Lower leg skin (tissue), 4 donors: ENCODE measurements at regions of chr11 and their contacts with region 1.

Region 1: DNA sequence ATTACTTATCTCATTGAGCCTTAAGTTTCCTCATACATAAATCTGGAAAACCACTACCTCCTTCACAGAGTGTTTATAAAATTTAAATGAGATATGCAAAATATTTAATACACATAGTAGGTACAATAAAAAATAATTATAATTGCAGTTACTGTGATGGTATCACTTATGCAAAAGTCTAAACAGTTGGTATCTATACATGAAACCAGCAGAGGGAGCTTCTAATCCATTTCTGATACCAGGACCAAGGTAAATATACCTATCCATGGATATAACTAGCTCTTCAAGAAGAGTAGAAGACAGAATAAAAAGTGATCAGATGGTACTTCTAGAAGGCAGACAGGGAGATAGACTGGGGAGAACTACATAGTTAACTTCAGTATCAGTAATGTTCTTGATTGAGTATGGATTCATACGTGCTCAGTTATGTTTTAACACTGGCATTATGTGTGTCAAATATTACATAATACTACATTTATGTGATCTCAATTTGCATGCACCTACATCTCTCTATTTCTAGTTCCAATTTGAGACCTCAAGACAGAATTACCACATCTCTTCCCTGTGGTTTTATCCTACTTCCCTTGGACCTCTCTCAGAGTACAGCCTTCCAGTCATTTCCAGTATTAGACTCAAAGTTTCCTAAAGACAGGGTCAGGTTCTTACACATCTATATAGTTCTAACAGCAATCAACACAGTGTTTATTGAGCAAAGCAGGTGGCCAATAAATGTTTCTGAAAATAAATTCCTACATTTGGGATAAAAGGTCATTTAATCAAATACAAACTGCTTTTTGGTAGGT is 13.7 kb upstream of the TSG101 start:
- DNase-seq: no peak
- H3K4me3 ChIP-seq: no peak overlapping the region
- CTCF ChIP-seq: no peak
- POLR2A ChIP-seq: no peak

Region 2: DNA sequence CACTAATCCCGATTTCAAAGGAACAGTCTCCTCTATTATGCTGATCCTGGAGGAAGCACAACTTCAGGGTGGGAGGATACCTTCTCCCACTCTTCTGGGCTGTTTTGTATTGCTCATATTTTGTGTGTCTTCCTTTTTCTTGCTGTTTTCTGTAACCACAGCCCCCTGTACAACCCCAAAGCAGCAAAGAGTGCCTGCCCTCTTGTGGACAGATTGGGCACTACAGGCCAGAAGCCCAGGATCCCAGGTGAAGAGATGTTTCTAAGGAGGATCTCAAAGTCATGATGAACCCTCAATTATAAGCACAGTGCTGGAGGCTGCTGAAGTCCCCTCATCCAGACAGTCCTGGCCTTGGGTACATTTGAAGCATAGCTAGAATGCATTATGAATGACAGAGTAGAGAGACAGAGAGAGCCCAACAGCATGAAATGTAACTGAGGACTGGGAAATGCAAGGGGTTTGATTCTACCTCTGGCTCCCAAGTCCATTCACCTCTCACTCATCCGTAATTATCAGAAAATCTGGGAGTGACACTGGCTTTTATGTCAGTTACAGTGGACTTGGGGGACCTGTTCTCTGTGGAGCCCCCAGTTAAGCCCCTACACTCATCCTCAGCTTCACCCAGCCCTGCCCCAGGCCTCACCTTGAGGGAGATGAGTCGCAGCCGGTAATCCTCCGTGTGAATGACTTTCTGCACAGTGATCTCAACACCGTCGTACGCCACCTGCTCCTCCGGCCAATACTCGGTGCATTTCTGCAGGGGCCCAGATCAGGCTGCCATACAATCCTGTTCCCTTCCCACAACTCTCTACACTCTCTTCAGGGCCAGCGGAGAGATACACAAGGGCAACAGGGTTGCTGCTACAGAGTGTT is 191.8 kb after region 1 on chr11:
- intact Hi-C with region 1: loop called (anchors 10 kb)
- DNase-seq: peak; percentile 47 to 92
- H3K4me3 ChIP-seq: no peak overlapping the region
- CTCF ChIP-seq: peak in 1 of 3 donors; percentile 49
- POLR2A ChIP-seq: no peak